Caco-2 (cell line): ENCODE measurements at regions of chr1 and their contacts with region 1.

Region 1: GRCh38 chr1:187928288-187928687 is 1099.5 kb downstream of the PLA2G4A start:
- DNase-seq: peak in 1 of 2 experiments; percentile 26
- H3K4me3 ChIP-seq: no peak overlapping the region
- H3K4me3 Mint-ChIP-seq: no peak overlapping the region
- H3K27ac Mint-ChIP-seq: no peak overlapping the region
- H3K4me1 ChIP-seq: peaks cover 2% of the 10 kb centered on the region; the same call in 1 of the 2 replicates
- H3K4me1 Mint-ChIP-seq: no peaks in the 10 kb centered on the region
- H3K27me3 ChIP-seq: no peaks in the 10 kb centered on the region
- H3K27me3 Mint-ChIP-seq: no peaks in the 10 kb centered on the region
- CTCF ChIP-seq: peak; percentile 23 to 58

Region 2: GRCh38 chr1:187605736-187606135 is 322.6 kb before region 1 on chr1:
- CTCF ChIA-PET with region 1: no interaction called
- POLR2A ChIA-PET with region 1: no interaction called
- intact Hi-C with region 1: no loop called
- DNase-seq: no peak
- H3K4me3 ChIP-seq: no peak overlapping the region
- H3K4me3 Mint-ChIP-seq: no peak overlapping the region
- H3K27ac Mint-ChIP-seq: no peak overlapping the region
- H3K4me1 ChIP-seq: no peaks in the 10 kb centered on the region
- H3K4me1 Mint-ChIP-seq: no peaks in the 10 kb centered on the region
- H3K27me3 ChIP-seq: no peaks in the 10 kb centered on the region
- H3K27me3 Mint-ChIP-seq: no peaks in the 10 kb centered on the region
- CTCF ChIP-seq: no peak

Region 3: GRCh38 chr1:187689129-187689528 is 239.2 kb before region 1 on chr1:
- CTCF ChIA-PET with region 1: no interaction called
- POLR2A ChIA-PET with region 1: no interaction called
- intact Hi-C with region 1: no loop called
- DNase-seq: no peak
- H3K4me3 ChIP-seq: no peak overlapping the region
- H3K4me3 Mint-ChIP-seq: no peak overlapping the region
- H3K27ac Mint-ChIP-seq: no peak overlapping the region
- H3K4me1 ChIP-seq: no peaks in the 10 kb centered on the region
- H3K4me1 Mint-ChIP-seq: no peaks in the 10 kb centered on the region
- H3K27me3 ChIP-seq: no peaks in the 10 kb centered on the region
- H3K27me3 Mint-ChIP-seq: no peaks in the 10 kb centered on the region
- CTCF ChIP-seq: no peak

Region 4: GRCh38 chr1:187862554-187862953 is 65.7 kb before region 1 on chr1:
- CTCF ChIA-PET with region 1: no interaction called
- POLR2A ChIA-PET with region 1: no interaction called
- intact Hi-C with region 1: no loop called
- DNase-seq: no peak
- H3K4me3 ChIP-seq: no peak overlapping the region
- H3K4me3 Mint-ChIP-seq: no peak overlapping the region
- H3K27ac Mint-ChIP-seq: no peak overlapping the region
- H3K4me1 ChIP-seq: no peaks in the 10 kb centered on the region
- H3K4me1 Mint-ChIP-seq: no peaks in the 10 kb centered on the region
- H3K27me3 ChIP-seq: no peaks in the 10 kb centered on the region
- H3K27me3 Mint-ChIP-seq: no peaks in the 10 kb centered on the region
- CTCF ChIP-seq: no peak

Region 5: GRCh38 chr1:187999973-188000372 is 71.7 kb after region 1 on chr1:
- CTCF ChIA-PET with region 1: interaction called, 3 read pairs
- POLR2A ChIA-PET with region 1: no interaction called
- intact Hi-C with region 1: loop called (anchors 1 kb)
- DNase-seq: no peak
- H3K4me3 ChIP-seq: no peak overlapping the region
- H3K4me3 Mint-ChIP-seq: no peak overlapping the region
- H3K27ac Mint-ChIP-seq: no peak overlapping the region
- H3K4me1 ChIP-seq: no peaks in the 10 kb centered on the region
- H3K4me1 Mint-ChIP-seq: no peaks in the 10 kb centered on the region
- H3K27me3 ChIP-seq: no peaks in the 10 kb centered on the region
- H3K27me3 Mint-ChIP-seq: no peaks in the 10 kb centered on the region
- CTCF ChIP-seq: peak in 1 of 2 experiments; percentile 6

Region 6: DNA sequence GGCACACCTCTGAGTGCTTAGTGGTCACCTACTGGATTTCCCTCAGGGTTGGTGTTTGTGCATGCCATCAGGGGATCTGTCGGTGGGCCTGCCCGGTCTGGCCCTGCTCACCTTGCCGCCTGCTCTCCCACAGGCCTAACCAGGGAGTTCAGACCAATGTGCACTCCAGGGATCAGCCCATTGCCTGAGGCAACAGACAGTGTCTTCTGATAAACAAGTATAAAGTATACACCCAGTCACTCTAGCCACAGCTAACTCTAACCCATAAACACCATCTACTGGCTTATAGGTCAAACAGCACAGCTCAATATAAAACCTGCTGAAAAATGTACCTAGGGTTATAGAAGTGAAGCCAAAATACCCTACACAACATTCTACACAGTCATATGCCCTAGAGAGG is 200.5 kb after region 1 on chr1:
- CTCF ChIA-PET with region 1: no interaction called
- POLR2A ChIA-PET with region 1: no interaction called
- intact Hi-C with region 1: loop called (anchors 10 kb)
- DNase-seq: no peak
- H3K4me3 ChIP-seq: no peak overlapping the region
- H3K4me3 Mint-ChIP-seq: no peak overlapping the region
- H3K27ac Mint-ChIP-seq: no peak overlapping the region
- H3K4me1 ChIP-seq: no peaks in the 10 kb centered on the region
- H3K4me1 Mint-ChIP-seq: no peaks in the 10 kb centered on the region
- H3K27me3 ChIP-seq: no peaks in the 10 kb centered on the region
- H3K27me3 Mint-ChIP-seq: no peaks in the 10 kb centered on the region
- CTCF ChIP-seq: no peak

Region 7: DNA sequence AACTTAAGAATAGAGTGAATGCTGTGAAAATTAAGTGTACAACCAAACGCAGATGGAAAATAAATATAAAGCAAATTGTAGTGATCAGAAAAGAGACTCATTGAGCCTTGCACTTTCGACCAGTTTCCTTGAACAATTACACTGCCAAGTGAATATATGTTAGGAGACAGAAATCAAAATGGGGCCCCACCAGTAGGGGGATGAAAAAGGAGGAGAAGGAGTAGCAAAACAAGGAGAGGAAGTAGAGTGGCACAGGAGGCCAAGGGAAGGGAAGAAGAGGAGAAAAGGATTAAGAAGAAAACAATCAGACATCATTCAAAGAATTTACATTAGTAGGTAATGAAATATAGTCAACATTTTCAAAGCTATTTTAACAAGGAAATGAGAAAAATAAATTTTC is 671.0 kb after region 1 on chr1:
- CTCF ChIA-PET with region 1: no interaction called
- POLR2A ChIA-PET with region 1: no interaction called
- intact Hi-C with region 1: loop called (anchors 5 kb)
- DNase-seq: no peak
- H3K4me3 ChIP-seq: no peak overlapping the region
- H3K4me3 Mint-ChIP-seq: no peak overlapping the region
- H3K27ac Mint-ChIP-seq: no peak overlapping the region
- H3K4me1 ChIP-seq: no peaks in the 10 kb centered on the region
- H3K4me1 Mint-ChIP-seq: no peaks in the 10 kb centered on the region
- H3K27me3 ChIP-seq: no peaks in the 10 kb centered on the region
- H3K27me3 Mint-ChIP-seq: no peaks in the 10 kb centered on the region
- CTCF ChIP-seq: no peak